Ascending aorta (tissue), 2 donors: ENCODE measurements at regions of chr5 and their contacts with region 1.

Region 1: GRCh38 chr5:159444441-159445082 is 114.3 kb upstream of the IL12B start:
- DNase-seq: no peak
- H3K4me3 ChIP-seq: no peak overlapping the region
- H3K27ac ChIP-seq: no peak overlapping the region
- H3K4me1 ChIP-seq: no peaks in the 10 kb centered on the region
- H3K27me3 ChIP-seq: no peaks in the 10 kb centered on the region
- CTCF ChIP-seq: peak; percentile 41 to 60 (median 52)

Region 2: DNA sequence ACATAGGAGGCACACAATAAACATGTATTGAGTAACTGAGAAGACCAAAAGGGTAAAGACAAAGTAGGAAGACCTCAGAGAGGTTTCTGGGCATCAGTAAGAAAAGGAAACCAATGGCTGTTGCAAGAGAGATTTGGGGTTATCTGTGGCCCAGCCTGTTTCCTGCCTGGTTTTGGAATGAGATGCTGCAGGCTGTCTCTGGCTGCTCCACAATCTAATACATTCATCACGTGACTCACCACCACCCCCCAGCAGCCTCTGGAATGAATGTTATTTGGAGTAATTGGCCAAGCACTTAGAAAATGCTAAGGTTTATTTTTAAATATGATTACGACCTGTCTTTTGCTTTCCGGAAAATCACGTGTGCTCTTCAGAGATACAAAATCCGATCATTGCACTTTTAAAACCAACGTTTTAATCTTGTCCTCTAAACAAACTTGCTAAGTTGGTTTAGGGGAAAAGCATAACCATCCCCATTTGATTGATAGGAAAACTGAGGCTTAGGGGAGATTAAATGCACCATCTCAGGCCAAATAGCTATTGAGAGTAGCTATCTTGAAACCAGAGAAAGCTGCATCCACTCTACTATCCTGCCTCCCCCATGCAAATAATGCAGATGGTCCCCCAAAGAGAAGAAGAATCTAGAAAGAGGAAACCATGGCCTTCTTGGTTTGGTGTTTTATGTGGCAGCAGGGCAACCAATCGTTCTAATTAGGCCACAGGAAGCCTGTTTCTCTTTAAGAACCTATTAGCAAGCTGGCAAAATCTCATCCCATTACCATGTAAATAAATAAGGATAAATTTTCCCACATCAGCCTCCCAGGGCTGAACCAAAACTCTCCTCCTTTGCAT is 319.9 kb after region 1 on chr5:
- intact Hi-C with region 1: loop called (anchors 5 kb)
- DNase-seq: peak in 1 of 2 donors; percentile 88
- H3K4me3 ChIP-seq: no peak overlapping the region
- H3K27ac ChIP-seq: peak overlapping the region; percentile 48 to 60
- H3K4me1 ChIP-seq: peaks cover 3 to 16% of the 10 kb centered on the region in 2 donors
- H3K27me3 ChIP-seq: no peaks in the 10 kb centered on the region
- CTCF ChIP-seq: no peak

Region 3: DNA sequence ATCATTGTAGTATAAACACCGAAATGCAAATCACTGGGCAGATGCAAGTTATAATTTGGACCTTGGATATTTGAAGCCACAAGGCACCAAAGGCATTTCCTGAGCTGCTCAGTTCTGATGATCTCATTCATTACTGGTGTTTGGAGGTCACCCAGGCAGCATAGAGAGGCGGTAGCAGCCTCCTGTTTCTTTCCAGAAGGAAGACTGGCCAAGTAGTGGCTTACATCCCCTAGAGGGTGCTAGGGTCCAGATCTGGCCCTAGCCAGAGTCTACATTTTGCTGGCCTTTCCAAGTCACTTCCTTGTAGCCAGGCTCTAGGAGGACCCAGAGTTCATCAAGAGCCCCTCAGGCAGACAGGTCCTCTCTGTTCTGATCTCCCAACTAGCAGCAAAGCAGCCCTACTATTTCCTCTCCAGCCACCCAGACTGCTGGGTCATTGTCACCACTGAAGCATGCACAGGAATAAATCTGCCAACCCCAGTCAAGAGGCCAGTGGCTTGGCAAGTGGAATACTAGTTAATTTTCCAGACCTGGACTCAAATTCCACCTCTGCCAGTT is 531.0 kb after region 1 on chr5:
- intact Hi-C with region 1: loop called (anchors 5 kb)
- DNase-seq: peak in 1 of 2 donors; percentile 82
- H3K4me3 ChIP-seq: no peak overlapping the region
- H3K27ac ChIP-seq: peak overlapping the region; percentile 80 to 90
- H3K4me1 ChIP-seq: peaks cover 18 to 20% of the 10 kb centered on the region in 2 donors
- H3K27me3 ChIP-seq: no peaks in the 10 kb centered on the region
- CTCF ChIP-seq: peak in 2 of 3 experiments; percentile 28 to 53

Region 4: DNA sequence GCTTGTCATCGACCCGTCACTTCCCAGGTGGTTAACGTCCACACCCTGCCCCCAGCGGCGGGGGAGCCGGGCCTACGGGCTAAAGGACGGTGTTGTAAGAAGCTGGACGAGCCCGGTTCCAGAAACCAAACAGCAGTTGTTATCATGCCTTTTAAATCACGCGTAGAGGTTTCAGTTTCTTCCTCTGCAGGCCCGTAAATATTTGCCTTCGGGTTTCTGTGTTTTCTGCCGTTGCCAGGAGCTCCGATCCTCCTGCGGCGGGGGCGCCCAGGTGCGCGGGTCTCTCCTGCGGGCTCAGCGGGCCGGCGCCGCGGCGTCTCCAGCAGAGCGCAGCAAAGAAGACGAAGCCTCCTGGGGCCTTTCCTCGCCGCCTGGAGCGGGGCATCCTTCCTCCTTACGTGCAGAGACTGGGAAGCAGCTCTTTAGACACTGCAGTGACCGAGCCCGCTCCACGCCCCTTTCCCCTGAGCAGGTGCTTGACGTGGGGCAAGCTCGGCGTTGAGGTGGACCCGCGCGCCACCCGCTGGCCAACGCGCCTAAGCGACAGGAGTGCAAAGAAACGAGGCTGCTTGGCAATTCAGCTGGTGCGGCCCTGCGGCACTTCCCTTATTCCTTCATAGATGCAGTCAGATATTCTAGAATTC is 542.6 kb after region 1 on chr5:
- intact Hi-C with region 1: loop called (anchors 2 kb)
- DNase-seq: peak in 1 of 2 donors; percentile 86
- H3K4me3 ChIP-seq: peak overlapping the region; percentile 54 to 74
- H3K27ac ChIP-seq: no peak overlapping the region
- H3K4me1 ChIP-seq: peaks cover 0 to 4% of the 10 kb centered on the region in 2 donors
- H3K27me3 ChIP-seq: no peaks in the 10 kb centered on the region
- CTCF ChIP-seq: peak; percentile 73 to 92 (median 75)